PC-3 (cell line): ENCODE measurements at regions of chr10 and their contacts with region 1.

Region 1: DNA sequence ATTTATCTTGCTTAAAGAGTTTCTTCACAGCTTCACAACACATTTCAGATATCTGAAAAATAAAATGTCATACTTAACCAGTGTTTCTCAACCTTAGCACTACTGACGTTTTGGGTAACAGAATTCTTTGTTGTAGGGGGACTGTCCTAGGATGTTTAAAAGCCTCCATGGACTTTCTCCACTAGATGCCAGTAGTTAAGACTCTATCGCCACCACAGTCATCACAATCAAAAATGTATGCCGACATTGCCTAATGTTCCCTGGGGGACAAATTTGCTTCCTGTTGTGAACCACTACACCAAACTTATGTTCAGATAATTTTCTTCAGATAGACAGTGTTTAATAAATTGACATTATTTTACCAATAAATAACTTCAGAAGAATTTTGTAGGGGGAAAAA is 13.4 kb downstream of the NOC3L start:
- DNase-seq: no peak
- ATAC-seq: no peak
- H3K4me3 ChIP-seq: no peak overlapping the region
- H3K27ac ChIP-seq: no peak overlapping the region
- H3K4me1 ChIP-seq: no peaks in the 10 kb centered on the region
- H3K27me3 ChIP-seq: no peaks in the 10 kb centered on the region
- CTCF ChIP-seq: no peak

Region 2: DNA sequence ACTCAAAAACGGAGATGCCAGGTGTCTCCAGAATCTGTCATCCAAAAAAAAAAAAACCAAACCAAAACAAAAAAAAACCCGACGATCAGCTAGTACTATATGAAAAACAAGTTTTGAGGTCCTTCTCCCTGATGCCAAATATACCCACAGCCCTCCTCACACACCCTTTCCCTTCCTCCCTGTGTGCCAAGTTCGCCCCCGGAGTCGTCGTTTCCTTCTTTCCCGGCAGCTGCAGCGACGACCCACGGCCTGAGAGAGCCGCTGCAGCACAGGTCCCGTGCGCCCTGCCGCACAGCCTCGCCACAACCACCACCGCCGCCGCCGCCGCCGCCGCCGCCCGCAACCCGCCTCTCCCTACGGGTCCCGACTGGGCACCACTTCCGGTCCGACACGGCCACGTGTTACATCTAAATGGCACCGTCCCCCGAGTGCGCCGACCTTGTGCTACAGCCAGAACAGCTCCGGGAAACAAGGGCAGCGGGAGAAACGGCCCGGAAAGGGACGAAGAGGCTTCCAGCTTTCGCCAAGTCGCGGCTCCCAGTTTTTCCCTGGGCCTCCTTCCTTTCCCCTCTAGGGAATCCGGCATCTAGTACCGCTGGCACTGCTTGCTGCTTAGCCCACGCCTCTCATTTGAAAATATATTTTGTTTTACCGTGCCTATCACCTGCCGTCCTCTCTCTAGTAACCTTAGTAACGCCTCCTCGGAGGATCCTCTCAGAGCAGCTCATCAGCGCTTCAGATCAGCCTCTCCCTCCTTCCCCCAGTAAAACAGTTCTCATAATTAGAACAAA is 646.9 kb before region 1 on chr10 and contains the start of gene FRA10AC1:
- CTCF ChIA-PET with region 1: no interaction called
- POLR2A ChIA-PET with region 1: interaction called, 10 read pairs
- intact Hi-C with region 1: no loop called
- DNase-seq: peak; percentile 80
- ATAC-seq: peak; percentile 93
- H3K4me3 ChIP-seq: peak within 1 kb of the TSS; percentile 76
- H3K27ac ChIP-seq: peak within 1 kb of the TSS; percentile 10; the same call in 1 of the 2 replicates
- H3K4me1 ChIP-seq: peaks cover 6% of the 10 kb centered on the region; the same call in 1 of the 2 replicates
- H3K27me3 ChIP-seq: no peaks in the 10 kb centered on the region
- CTCF ChIP-seq: peak; percentile 60
- total RNA-seq, gene FRA10AC1: 3.8 and 5.5 TPM in 2 replicates

Region 3: GRCh38 chr10:94183666-94184264 is 165.6 kb before region 1 on chr10:
- CTCF ChIA-PET with region 1: no interaction called
- POLR2A ChIA-PET with region 1: no interaction called
- intact Hi-C with region 1: no loop called
- DNase-seq: peak; percentile 88
- ATAC-seq: peak; percentile 98
- H3K4me3 ChIP-seq: no peak overlapping the region
- H3K27ac ChIP-seq: peak overlapping the region; percentile 73
- H3K4me1 ChIP-seq: peaks cover 17% of the 10 kb centered on the region
- H3K27me3 ChIP-seq: no peaks in the 10 kb centered on the region
- CTCF ChIP-seq: no peak

Region 4: GRCh38 chr10:94299417-94299816 is 49.9 kb before region 1 on chr10:
- CTCF ChIA-PET with region 1: no interaction called
- POLR2A ChIA-PET with region 1: no interaction called
- intact Hi-C with region 1: no loop called
- DNase-seq: peak; percentile 64
- ATAC-seq: peak; percentile 53; the same call in 1 of the 2 replicates
- H3K4me3 ChIP-seq: no peak overlapping the region
- H3K27ac ChIP-seq: no peak overlapping the region
- H3K4me1 ChIP-seq: peaks cover 10% of the 10 kb centered on the region
- H3K27me3 ChIP-seq: no peaks in the 10 kb centered on the region
- CTCF ChIP-seq: no peak